ENCODE measurements at regions of chr16 and their contacts with region 1.

Region 1: DNA sequence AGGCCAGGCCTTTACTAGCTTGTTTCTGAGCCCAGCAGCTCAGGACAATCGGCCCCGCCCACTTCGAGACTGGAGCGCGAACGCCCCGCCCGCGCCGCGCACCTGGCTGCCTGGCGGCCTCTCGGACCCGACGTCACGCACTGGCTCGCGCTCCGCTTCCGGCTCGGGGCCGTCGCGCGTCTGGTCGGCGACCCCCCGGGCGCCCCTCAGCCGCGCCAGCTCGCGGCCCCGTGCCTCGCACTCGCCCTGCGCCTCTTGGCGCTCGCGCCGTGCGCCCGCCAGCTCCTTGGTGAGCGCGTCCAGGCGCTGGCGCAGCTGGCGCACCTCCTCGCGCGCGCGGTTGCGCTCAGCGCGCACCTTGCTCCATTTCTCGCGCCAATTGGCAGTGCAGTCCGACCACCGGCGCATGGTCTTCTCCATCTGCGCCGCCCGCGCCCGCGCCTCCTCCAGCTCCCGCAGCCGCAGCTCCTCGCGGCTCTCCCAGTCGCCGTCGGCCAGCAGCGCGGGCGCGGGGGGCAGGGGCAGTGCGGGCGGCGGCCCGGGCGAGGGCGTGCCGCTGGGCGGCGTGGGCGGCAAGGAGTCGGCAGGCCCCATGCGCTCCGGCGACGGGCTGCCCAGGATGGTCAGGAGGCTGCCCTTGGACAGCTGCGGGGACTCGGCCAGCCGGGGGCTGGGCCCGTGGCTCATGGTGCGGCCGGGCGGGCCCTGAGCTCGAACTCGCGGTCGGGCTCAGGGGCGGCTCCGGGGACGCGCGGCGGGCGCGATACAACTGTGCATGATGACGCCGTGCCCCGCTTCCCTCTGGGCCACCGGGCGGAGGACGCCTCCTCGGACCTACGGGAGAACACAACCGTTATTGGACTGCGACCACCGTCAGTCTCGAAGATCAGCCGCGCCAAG is 7.6 kb downstream of the CCDC102A start:
- DNase-seq: peak; percentile 91
- ATAC-seq: peak; percentile 61
- H3K4me3 Mint-ChIP-seq: peak overlapping the region; percentile 71
- H3K27ac Mint-ChIP-seq: peak overlapping the region; percentile 77; the same call in 1 of the 2 replicates
- H3K4me1 Mint-ChIP-seq: peaks cover 55% of the 10 kb centered on the region
- H3K27me3 Mint-ChIP-seq: peaks cover 24% of the 10 kb centered on the region
- CTCF ChIP-seq: no peak

Region 2: GRCh38 chr16:57475711-57476339 is 52.9 kb before region 1 on chr16:
- CTCF ChIA-PET with region 1: interaction called, 13 read pairs
- POLR2A ChIA-PET with region 1: no interaction called
- DNase-seq: peak; percentile 95
- ATAC-seq: peak; percentile 81
- H3K4me3 Mint-ChIP-seq: peak overlapping the region; percentile 43; the same call in 1 of the 2 replicates
- H3K27ac Mint-ChIP-seq: peak overlapping the region; percentile 27; the same call in 1 of the 2 replicates
- H3K4me1 Mint-ChIP-seq: peaks cover 75% of the 10 kb centered on the region
- H3K27me3 Mint-ChIP-seq: peaks cover 6% of the 10 kb centered on the region
- CTCF ChIP-seq: peak; percentile 72

Region 3: DNA sequence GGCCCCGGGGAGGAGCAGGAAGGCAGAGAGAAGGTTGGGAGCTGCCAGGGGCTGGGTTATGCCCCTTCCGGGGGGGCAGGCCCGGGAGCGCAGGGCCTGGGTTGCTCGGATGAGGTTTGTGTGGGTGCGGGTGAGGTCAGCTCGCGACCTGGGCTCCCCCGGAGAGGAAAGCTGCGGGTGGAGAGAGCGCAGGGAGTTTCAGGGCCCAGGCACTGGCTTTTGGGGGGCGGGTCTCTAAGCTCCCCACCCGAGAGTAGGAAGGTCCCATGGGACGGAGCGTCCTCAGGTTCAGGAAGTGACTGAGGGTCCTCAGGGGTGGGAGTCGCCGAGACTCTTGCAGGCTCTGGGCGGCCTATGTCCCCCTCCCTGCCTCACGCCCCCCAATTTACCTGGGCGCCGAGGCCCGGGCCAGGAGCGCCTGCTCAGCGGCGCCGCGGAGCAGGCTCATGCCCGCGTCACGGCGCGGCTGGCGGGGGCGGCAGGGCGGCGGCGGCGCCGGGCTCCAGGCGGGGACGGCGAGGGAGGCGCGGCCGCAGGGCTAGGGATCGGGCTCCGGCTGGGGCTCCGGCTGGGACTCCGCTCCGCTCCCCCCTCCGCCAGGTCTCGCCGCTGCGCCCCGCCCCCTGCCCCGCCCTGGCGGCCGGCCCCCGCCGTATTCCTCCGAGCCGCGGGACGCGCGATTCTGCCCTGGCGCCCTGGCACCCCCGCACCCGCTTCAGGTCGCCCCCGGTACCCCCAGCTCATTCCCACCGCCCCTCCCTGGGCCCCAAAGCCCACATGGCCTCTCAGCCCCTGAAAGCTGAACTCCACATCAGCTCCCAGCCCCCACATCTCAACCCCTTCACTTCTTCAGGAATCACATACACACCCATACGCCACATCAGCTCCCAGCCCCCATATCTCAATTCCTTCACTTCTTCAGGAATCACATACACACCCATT is 42.6 kb before region 1 on chr16 and contains the start of gene DOK4:
- CTCF ChIA-PET with region 1: interaction called, 11 read pairs
- POLR2A ChIA-PET with region 1: no interaction called
- DNase-seq: peak; percentile 80
- ATAC-seq: peak; percentile 92
- H3K4me3 Mint-ChIP-seq: peak within 1 kb of the TSS; percentile 76
- H3K27ac Mint-ChIP-seq: no peak within 1 kb of the TSS
- H3K4me1 Mint-ChIP-seq: peaks cover 16% of the 10 kb centered on the region
- H3K27me3 Mint-ChIP-seq: peaks cover 21% of the 10 kb centered on the region
- CTCF ChIP-seq: no peak
- total RNA-seq, gene DOK4: 21.8 to 25.0 TPM (median 21.9 TPM) in 3 replicates